Transverse colon (tissue), 4 donors: ENCODE measurements at regions of chr11 and their contacts with region 1.

Region 1: DNA sequence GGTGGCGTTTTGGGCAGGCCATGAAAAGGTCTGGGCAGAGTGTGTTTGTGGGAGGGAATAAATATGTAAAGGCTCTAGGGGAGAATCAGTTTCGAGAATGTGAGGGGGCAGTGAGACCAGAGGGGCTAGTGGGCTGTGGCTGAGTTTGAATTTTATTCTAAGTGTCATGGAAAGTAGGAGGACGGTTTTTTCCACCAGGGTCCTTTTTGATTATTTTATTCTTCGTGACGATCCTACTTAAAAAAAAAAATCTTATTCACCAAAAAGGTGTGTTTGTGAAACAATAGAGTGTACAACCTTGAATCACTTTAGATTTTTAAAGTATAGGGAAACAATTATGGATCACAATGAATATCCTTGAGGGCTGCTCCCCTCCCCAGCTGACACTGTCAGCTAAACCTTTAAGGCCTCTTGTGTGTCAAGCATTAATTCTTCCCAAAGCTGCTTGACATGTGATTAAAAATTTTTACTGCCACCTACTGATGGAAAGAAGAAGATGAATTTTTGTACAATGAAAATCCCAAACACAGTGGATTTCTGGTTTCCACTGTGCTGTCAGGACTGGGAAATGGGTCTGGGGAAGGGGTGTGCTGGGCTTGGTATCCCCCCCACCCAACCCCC is 107.5 kb upstream of the OR4B1 start:
- DNase-seq: no peak
- H3K4me3 ChIP-seq: peak overlapping the region in 3 of 4 donors; percentile 16 to 31 (median 21)
- H3K27ac ChIP-seq: peak overlapping the region; percentile 49 to 76 (median 60)
- H3K4me1 ChIP-seq: peaks cover 13 to 42% (median 24%) of the 10 kb centered on the region in 4 donors
- H3K27me3 ChIP-seq: no peaks in the 10 kb centered on the region
- CTCF ChIP-seq: peak in 3 of 5 experiments; percentile 13 to 35 (median 23)
- EP300 ChIP-seq: no peak
- POLR2A ChIP-seq: no peak

Region 2: DNA sequence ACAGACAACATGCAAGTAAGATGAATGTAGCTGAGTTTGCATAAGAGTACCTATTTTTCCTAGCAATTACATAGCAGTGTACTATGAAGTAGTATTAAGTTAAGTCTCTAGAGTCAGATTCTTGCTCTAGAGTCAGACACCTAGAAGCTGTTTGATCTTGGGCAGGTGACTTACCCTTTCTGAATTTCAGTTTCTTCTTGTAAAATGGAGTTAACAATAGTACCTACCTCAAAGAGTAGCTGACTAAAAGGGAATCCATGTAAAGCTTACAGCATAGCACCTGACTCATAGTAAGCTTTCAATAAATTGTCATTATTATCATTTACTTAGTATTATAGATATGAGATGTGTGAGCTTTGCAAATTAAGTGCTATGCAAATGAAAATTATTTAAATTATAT is 176.6 kb before region 1 on chr11:
- in situ Hi-C with region 1: loop called in 2 of 4 experiments (anchors 5 kb)
- intact Hi-C with region 1: loop called (anchors 5 kb)
- DNase-seq: no peak
- H3K4me3 ChIP-seq: no peak overlapping the region
- H3K27ac ChIP-seq: no peak overlapping the region
- H3K4me1 ChIP-seq: peaks cover 0 to 4% (median 0%) of the 10 kb centered on the region in 4 donors
- H3K27me3 ChIP-seq: no peaks in the 10 kb centered on the region
- CTCF ChIP-seq: no peak
- EP300 ChIP-seq: no peak
- POLR2A ChIP-seq: no peak

Region 3: GRCh38 chr11:47938791-47939560 is 170.2 kb before region 1 on chr11:
- in situ Hi-C with region 1: loop called (anchors 5 to 10 kb)
- intact Hi-C with region 1: loop called (anchors 5 kb)
- DNase-seq: no peak
- H3K4me3 ChIP-seq: no peak overlapping the region
- H3K27ac ChIP-seq: no peak overlapping the region
- H3K4me1 ChIP-seq: peaks cover 0 to 8% (median 0%) of the 10 kb centered on the region in 4 donors
- H3K27me3 ChIP-seq: no peaks in the 10 kb centered on the region
- CTCF ChIP-seq: no peak
- EP300 ChIP-seq: no peak
- POLR2A ChIP-seq: no peak

Region 4: DNA sequence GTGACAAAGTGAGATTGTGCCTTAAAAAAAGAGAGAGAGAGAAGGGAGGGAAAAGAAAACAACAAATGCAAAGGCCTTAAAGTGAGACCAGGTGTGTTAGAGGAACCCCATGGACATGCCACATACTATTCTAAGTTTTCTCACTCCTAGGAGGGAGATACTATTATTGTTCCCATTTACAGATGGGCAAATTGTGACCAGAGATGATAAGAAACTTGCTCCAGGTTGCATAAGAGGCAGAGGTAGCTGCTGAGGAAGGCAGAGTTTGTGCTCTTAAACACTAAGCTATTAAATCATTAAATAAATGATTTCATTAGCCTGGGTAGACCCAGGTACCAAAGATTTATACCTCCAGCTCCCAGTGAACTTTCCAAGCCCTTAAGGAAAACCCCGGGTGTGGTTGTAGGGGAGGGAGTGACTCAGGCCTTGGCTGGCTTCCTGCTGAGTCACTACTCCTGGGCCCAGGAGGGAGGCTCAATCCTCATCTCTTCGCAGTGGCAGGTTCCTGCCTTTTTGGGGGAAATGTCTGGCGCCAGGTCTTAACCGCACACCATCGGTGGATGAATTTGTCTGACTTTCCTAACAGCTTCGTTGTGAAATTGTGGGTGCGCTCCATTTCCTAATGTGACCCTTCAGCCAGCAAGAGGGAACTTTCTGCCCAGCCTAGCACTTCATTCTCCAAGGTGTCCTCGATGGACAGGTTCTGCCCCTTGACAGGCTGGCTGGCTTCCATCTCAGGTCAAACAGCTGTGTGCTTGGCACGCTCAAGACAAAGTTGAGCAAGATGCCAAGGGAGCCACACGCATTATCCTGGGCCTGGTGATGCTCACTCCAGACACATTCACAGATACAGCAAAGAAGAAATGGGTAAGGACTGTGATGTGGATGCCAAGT is 162.2 kb before region 1 on chr11:
- in situ Hi-C with region 1: loop called in 2 of 4 experiments (anchors 10 kb)
- intact Hi-C with region 1: no loop called
- DNase-seq: peak; percentile 73
- H3K4me3 ChIP-seq: no peak overlapping the region
- H3K27ac ChIP-seq: peak overlapping the region in 3 of 4 donors; percentile 4 to 44 (median 4)
- H3K4me1 ChIP-seq: peaks cover 6 to 9% (median 8%) of the 10 kb centered on the region in 4 donors
- H3K27me3 ChIP-seq: no peaks in the 10 kb centered on the region
- CTCF ChIP-seq: no peak
- EP300 ChIP-seq: no peak
- POLR2A ChIP-seq: no peak

Region 5: GRCh38 chr11:48093795-48094642 is 15.1 kb before region 1 on chr11:
- in situ Hi-C with region 1: no loop called
- intact Hi-C with region 1: no loop called
- DNase-seq: no peak
- H3K4me3 ChIP-seq: no peak overlapping the region
- H3K27ac ChIP-seq: peak overlapping the region; percentile 59 to 71 (median 61)
- H3K4me1 ChIP-seq: peaks cover 3 to 39% (median 24%) of the 10 kb centered on the region in 4 donors
- H3K27me3 ChIP-seq: no peaks in the 10 kb centered on the region
- CTCF ChIP-seq: no peak
- EP300 ChIP-seq: no peak
- POLR2A ChIP-seq: no peak